ENCODE measurements at regions of chr4 and their contacts with region 1.

Region 1: DNA sequence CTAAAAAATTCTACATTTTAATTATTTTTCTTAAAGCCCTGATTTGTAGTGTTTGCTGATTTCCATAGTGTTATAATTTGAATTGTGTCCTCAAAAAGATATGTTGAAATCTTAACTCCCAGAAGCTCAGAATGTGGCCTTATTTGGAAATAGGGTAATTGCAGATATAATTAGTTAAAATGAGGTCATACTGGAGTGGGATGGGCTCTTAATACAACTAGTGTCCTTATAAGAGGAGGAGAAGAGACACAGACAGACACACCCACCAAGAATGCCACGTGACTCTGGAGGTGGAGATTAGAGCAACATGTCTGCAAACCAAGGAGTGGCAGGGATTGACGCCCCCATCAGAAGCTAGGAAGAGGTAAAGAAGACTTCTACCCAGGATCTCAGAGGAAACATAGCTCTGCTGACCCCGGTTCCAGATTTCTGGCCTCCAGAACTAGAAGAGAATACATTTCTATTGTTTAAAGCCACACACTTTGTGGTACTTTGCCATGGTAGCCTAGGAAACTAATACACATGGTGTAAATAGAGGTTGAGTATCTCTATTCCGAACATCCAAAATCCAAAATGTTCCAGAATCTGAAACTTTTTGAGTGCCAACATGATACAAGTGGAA is 70.5 kb upstream of the IRF2 start:
- DNase-seq: no peak
- ATAC-seq: no peak
- H3K4me3 ChIP-seq: no peak overlapping the region
- H3K27ac ChIP-seq: no peak overlapping the region
- H3K4me1 ChIP-seq: no peaks in the 10 kb centered on the region
- H3K27me3 ChIP-seq: no peaks in the 10 kb centered on the region
- CTCF ChIP-seq: no peak

Region 2: GRCh38 chr4:184074989-184075388 is 469.9 kb before region 1 on chr4:
- intact Hi-C with region 1: no loop called
- DNase-seq: no peak
- ATAC-seq: no peak
- H3K4me3 ChIP-seq: no peak overlapping the region
- H3K27ac ChIP-seq: no peak overlapping the region
- H3K4me1 ChIP-seq: no peaks in the 10 kb centered on the region
- H3K27me3 ChIP-seq: no peaks in the 10 kb centered on the region
- CTCF ChIP-seq: no peak

Region 3: GRCh38 chr4:184250795-184251669 is 293.9 kb before region 1 on chr4:
- intact Hi-C with region 1: loop called (anchors 10 kb)
- DNase-seq: no peak
- ATAC-seq: peak; percentile 86
- H3K4me3 ChIP-seq: no peak overlapping the region
- H3K27ac ChIP-seq: no peak overlapping the region
- H3K4me1 ChIP-seq: no peaks in the 10 kb centered on the region
- H3K27me3 ChIP-seq: no peaks in the 10 kb centered on the region
- CTCF ChIP-seq: peak; percentile 68

Region 4: DNA sequence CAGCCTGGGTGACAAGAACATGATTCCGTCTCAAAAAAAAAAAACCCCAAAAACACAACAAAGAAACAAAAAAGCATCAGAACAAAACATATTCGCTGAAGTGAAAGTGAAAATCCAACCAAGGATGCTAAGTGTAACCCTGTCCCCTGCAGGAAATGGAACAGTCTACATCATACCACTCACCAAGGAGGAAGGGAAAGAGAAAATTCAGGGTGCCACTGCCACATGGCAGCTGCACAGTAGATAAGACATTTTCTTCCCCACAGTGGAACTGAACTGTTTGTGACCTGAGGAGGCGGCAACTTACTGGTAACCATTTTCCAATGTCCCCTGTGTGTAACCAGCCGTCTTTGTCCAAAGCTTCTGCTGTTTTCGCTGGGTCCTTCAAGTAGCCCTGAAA is 217.2 kb after region 1 on chr4:
- intact Hi-C with region 1: no loop called
- DNase-seq: no peak
- ATAC-seq: peak; percentile 41
- H3K4me3 ChIP-seq: no peak overlapping the region
- H3K27ac ChIP-seq: no peak overlapping the region
- H3K4me1 ChIP-seq: no peaks in the 10 kb centered on the region
- H3K27me3 ChIP-seq: no peaks in the 10 kb centered on the region
- CTCF ChIP-seq: no peak

Measured in upper lobe of right lung (tissue), 1 donor.